ENCODE measurements at regions of chr18 and their contacts with region 1.

Region 1: DNA sequence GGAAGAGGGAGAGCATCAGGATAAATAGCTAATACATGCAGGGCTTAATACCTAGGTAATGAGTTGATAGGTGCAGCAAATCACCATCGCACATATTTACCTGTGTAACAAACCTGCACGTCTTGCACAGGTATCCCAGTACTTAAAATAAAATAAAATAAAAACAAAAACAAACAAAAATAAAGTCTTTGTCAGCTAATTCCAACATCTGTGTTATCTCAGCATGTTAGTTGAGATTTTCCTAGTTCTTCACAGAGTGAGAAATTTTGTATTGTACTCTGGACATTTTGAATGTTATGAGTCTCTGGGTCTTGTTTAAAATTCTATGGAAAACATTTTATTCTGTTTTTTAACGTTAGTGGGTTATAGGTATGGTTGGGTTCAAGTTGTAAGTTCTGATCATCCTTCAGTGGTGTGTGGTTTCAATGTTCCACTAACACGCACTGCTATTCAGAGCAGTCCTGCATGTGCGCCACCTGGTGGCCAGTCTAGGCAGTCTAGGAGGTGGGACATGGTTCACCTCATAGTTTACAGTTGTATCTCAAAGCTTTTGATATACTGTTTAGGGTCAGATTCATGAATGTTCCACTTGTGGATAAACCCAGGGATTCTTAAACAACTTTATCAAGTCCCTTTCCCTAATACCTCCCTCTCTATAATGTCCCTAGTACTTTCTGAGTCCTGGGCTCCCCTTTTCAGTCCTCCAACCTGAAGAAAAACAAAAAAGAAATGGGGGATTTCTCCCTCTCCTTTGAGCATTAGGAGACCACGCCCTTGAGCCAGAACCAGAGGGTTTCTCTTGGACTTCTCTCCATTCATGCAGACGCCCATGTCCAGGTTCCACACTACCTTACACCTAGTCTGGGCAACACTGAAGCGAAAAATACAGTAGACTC is 213.4 kb upstream of the GATA6 start:
- DNase-seq: peak; percentile 70
- CTCF ChIP-seq: peak; percentile 90

Region 2: GRCh38 chr18:21509062-21509461 is 446.9 kb before region 1 on chr18:
- in situ Hi-C with region 1: loop called (anchors 25 kb)
- DNase-seq: no peak
- CTCF ChIP-seq: no peak

Measured in GM13976 (cell line).